Common myeloid progenitor, CD34-positive (primary cell): ENCODE measurements at regions of chr9 and their contacts with region 1.

Region 1: GRCh38 chr9:9942764-9943424 is 669.9 kb downstream of the PTPRD start:
- DNase-seq: peak; percentile 69 to 79 (median 69)
- H3K4me3 ChIP-seq: no peak overlapping the region
- H3K27ac ChIP-seq: no peak overlapping the region
- H3K4me1 ChIP-seq: peaks cover 0 to 3% (median 0%) of the 10 kb centered on the region in 4 experiments
- H3K27me3 ChIP-seq: no peaks in the 10 kb centered on the region

Region 2: GRCh38 chr9:9603345-9603744 is 339.5 kb before region 1 on chr9:
- CTCF ChIA-PET with region 1: interaction called, 92 read pairs
- POLR2A ChIA-PET with region 1: no interaction called
- DNase-seq: no peak
- H3K4me3 ChIP-seq: no peak overlapping the region
- H3K27ac ChIP-seq: no peak overlapping the region
- H3K4me1 ChIP-seq: peaks cover 0 to 1% (median 0%) of the 10 kb centered on the region in 4 experiments
- H3K27me3 ChIP-seq: no peaks in the 10 kb centered on the region

Region 3: DNA sequence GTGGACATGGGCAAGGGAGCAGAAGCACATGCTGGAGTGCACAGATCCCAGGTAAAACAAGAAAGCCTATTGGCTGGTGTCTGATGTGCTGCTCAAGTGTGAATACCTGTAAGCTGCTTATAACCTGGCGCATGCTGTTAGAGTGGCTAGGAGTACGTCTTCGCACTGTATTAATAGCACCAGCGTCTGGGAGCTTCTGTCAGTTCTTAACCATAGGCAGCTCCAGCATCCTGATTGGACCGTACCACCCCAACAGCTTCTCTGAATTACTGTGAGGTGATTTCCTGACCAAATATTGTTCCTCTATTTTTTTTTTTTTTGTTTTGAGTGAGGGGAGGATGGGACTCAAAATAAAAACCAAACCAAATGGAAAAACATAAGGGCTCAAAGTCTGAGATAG is 317.6 kb before region 1 on chr9:
- CTCF ChIA-PET with region 1: no interaction called
- POLR2A ChIA-PET with region 1: no interaction called
- DNase-seq: no peak
- H3K4me3 ChIP-seq: no peak overlapping the region
- H3K27ac ChIP-seq: no peak overlapping the region
- H3K4me1 ChIP-seq: no peaks in the 10 kb centered on the region
- H3K27me3 ChIP-seq: no peaks in the 10 kb centered on the region

Region 4: GRCh38 chr9:10008101-10008799 is 65.4 kb after region 1 on chr9:
- CTCF ChIA-PET with region 1: no interaction called
- POLR2A ChIA-PET with region 1: no interaction called
- DNase-seq: no peak
- H3K4me3 ChIP-seq: no peak overlapping the region
- H3K27ac ChIP-seq: no peak overlapping the region
- H3K4me1 ChIP-seq: peaks cover 0 to 8% (median 4%) of the 10 kb centered on the region in 4 experiments
- H3K27me3 ChIP-seq: no peaks in the 10 kb centered on the region